Activated CD8-positive, alpha-beta T cell treated with anti-CD3 and anti-CD28 coated beads for 36 hours (primary cell): ENCODE measurements at regions of chr3 and their contacts with region 1.

Region 1: DNA sequence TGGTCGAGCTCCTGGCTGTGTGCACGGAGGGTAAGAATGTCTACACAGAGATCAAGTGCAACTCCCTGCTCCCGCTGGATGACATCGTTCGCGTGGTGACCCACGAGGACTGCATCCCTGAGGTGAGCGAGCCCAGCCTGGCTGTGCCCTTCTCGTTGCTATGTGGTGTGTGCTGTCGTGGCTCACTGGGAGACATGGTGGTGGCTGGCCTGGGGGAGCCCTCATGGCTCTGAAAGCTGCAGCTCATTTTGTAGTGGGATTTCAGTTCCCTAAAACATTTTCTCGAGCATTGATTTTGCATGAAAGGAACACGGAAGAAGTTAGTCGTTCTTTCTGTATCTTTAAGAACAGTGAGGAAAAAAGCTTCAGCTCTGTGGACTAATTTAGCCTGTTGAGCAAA is 200.5 kb downstream of the ITPR1 start:
- DNase-seq: no peak
- ATAC-seq: no peak
- H3K4me3 Mint-ChIP-seq: no peak overlapping the region
- H3K27ac Mint-ChIP-seq: no peak overlapping the region
- H3K4me1 Mint-ChIP-seq: no peaks in the 10 kb centered on the region
- H3K27me3 Mint-ChIP-seq: no peaks in the 10 kb centered on the region
- CTCF ChIP-seq: no peak

Region 2: GRCh38 chr3:3160826-3161225 is 1532.8 kb before region 1 on chr3:
- CTCF ChIA-PET with region 1: no interaction called
- POLR2A ChIA-PET with region 1: no interaction called
- intact Hi-C with region 1: loop called (anchors 10 kb)
- DNase-seq: no peak
- ATAC-seq: no peak
- H3K4me3 Mint-ChIP-seq: no peak overlapping the region
- H3K27ac Mint-ChIP-seq: peak overlapping the region; percentile 66
- H3K4me1 Mint-ChIP-seq: peaks cover 42% of the 10 kb centered on the region
- H3K27me3 Mint-ChIP-seq: no peaks in the 10 kb centered on the region
- CTCF ChIP-seq: no peak

Region 3: DNA sequence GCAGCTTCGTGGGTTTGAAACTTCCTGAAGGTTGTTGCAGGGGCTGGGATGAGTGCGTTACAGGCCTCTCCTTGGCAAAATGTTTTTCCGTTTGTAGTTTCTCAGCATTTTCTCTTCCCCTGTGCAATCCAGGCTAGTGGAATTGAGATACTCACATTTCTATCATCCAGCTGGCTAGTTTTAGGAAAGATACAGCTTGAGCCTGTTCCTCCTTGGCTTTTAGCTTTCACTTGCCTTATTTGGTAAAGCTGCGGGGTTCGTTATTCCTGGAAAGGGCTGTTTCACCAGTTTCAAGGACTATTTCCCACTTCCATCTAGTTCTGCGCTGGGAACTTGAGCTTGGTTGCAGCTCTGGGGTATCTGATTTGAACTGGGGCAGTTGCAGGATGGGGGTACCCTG is 110.2 kb before region 1 on chr3:
- CTCF ChIA-PET with region 1: no interaction called
- POLR2A ChIA-PET with region 1: no interaction called
- intact Hi-C with region 1: no loop called
- DNase-seq: no peak
- ATAC-seq: no peak
- H3K4me3 Mint-ChIP-seq: no peak overlapping the region
- H3K27ac Mint-ChIP-seq: no peak overlapping the region
- H3K4me1 Mint-ChIP-seq: peaks cover 67% of the 10 kb centered on the region
- H3K27me3 Mint-ChIP-seq: no peaks in the 10 kb centered on the region
- CTCF ChIP-seq: no peak

Region 4: GRCh38 chr3:5357089-5357488 is 663.5 kb after region 1 on chr3:
- CTCF ChIA-PET with region 1: no interaction called
- POLR2A ChIA-PET with region 1: no interaction called
- intact Hi-C with region 1: no loop called
- DNase-seq: no peak
- ATAC-seq: no peak
- H3K4me3 Mint-ChIP-seq: no peak overlapping the region
- H3K27ac Mint-ChIP-seq: no peak overlapping the region
- H3K4me1 Mint-ChIP-seq: no peaks in the 10 kb centered on the region
- H3K27me3 Mint-ChIP-seq: peaks cover 5% of the 10 kb centered on the region
- CTCF ChIP-seq: no peak